ENCODE measurements at regions of chr6 and their contacts with region 1.

Region 1: GRCh38 chr6:67068781-67069180 is 1361.8 kb upstream of the EYS start:
- DNase-seq: no peak
- ATAC-seq: no peak
- H3K4me3 ChIP-seq: no peak overlapping the region
- H3K27ac ChIP-seq: no peak overlapping the region
- H3K4me1 ChIP-seq: no peaks in the 10 kb centered on the region
- H3K27me3 ChIP-seq: no peaks in the 10 kb centered on the region
- CTCF ChIP-seq: no peak

Region 2: GRCh38 chr6:66964216-66964615 is 104.6 kb before region 1 on chr6:
- CTCF ChIA-PET with region 1: interaction called, 14 read pairs
- POLR2A ChIA-PET with region 1: no interaction called
- in situ Hi-C with region 1: no loop called
- intact Hi-C with region 1: no loop called
- DNase-seq: no peak
- ATAC-seq: no peak
- H3K4me3 ChIP-seq: no peak overlapping the region
- H3K27ac ChIP-seq: no peak overlapping the region
- H3K4me1 ChIP-seq: no peaks in the 10 kb centered on the region
- H3K27me3 ChIP-seq: no peaks in the 10 kb centered on the region
- CTCF ChIP-seq: no peak

Region 3: DNA sequence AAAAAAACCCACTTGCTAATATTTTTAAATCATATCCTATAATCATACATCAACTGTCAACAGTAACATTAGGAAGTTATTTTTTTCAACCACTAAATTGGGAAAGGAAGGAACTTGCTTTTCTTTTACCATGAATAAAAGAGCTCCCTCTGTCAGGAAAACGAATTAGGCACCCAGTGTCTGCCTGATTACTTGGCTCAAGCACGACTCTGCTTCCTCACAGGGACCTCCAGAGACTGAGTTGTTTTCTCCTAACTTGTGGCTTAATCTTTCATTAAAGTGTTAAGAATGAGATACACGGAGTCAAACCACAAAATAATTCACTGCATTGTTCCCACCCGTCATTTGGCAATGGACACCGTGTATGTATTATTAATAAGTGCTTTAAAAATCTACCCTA is 43.3 kb after region 1 on chr6:
- CTCF ChIA-PET with region 1: no interaction called
- POLR2A ChIA-PET with region 1: no interaction called
- in situ Hi-C with region 1: no loop called
- intact Hi-C with region 1: no loop called
- DNase-seq: no peak
- ATAC-seq: no peak
- H3K4me3 ChIP-seq: no peak overlapping the region
- H3K27ac ChIP-seq: no peak overlapping the region
- H3K4me1 ChIP-seq: no peaks in the 10 kb centered on the region
- H3K27me3 ChIP-seq: no peaks in the 10 kb centered on the region
- CTCF ChIP-seq: peak; percentile 7; the same call in 1 of the 2 replicates

Region 4: DNA sequence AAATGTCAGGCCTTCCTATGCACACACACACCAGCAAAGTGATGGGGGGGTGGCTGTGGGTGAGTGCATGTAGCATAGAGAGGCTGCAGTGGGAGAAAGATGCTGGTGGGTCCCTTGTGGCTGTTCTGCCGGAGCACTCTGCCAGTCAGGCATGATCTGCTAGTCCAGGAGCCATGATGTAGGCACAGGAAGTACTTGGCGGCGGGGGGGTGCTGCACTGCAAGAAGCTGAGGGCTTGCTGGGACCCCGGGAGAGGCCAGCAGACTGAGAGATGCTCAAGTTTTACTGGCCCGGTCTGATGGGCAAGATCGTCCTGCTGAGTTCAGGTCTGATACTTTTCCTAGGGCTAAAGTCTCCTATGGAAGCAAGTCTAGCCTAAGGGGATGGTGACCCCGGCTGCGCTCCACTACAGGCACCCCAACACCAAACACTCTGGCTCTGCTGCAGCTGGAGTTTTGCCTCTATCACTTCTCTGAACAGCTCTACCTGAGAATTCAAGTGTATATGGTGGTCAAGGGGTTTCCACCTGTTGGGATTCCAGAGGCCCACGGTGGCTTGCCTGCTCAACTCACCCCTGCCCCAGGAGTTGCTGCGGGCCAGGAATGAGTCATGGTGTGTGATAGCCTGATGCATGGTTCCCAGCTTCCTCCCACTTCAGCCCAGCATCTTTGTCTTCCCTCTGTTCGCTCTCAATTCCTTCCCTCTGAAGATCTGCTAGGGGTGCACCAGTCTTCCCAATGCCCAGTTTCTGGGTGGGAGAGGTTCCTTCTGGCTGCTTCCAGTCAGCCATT is 594.5 kb after region 1 on chr6:
- CTCF ChIA-PET with region 1: no interaction called
- POLR2A ChIA-PET with region 1: no interaction called
- in situ Hi-C with region 1: no loop called
- intact Hi-C with region 1: no loop called
- DNase-seq: no peak
- ATAC-seq: no peak
- H3K4me3 ChIP-seq: no peak overlapping the region
- H3K27ac ChIP-seq: no peak overlapping the region
- H3K4me1 ChIP-seq: no peaks in the 10 kb centered on the region
- H3K27me3 ChIP-seq: no peaks in the 10 kb centered on the region
- CTCF ChIP-seq: no peak

Region 5: GRCh38 chr6:68144667-68145066 is 1075.9 kb after region 1 on chr6:
- CTCF ChIA-PET with region 1: interaction called, 13 read pairs
- POLR2A ChIA-PET with region 1: no interaction called
- in situ Hi-C with region 1: no loop called
- intact Hi-C with region 1: no loop called
- DNase-seq: no peak
- ATAC-seq: no peak
- H3K4me3 ChIP-seq: no peak overlapping the region
- H3K27ac ChIP-seq: no peak overlapping the region
- H3K4me1 ChIP-seq: no peaks in the 10 kb centered on the region
- H3K27me3 ChIP-seq: no peaks in the 10 kb centered on the region
- CTCF ChIP-seq: no peak

Region 6: GRCh38 chr6:68200929-68201328 is 1132.1 kb after region 1 on chr6:
- CTCF ChIA-PET with region 1: interaction called, 17 read pairs
- POLR2A ChIA-PET with region 1: no interaction called
- in situ Hi-C with region 1: no loop called
- intact Hi-C with region 1: no loop called
- DNase-seq: no peak
- ATAC-seq: no peak
- H3K4me3 ChIP-seq: no peak overlapping the region
- H3K27ac ChIP-seq: no peak overlapping the region
- H3K4me1 ChIP-seq: no peaks in the 10 kb centered on the region
- H3K27me3 ChIP-seq: no peaks in the 10 kb centered on the region
- CTCF ChIP-seq: no peak